A549 (cell line): ENCODE measurements at regions of chr18 and their contacts with region 1.

Region 1: DNA sequence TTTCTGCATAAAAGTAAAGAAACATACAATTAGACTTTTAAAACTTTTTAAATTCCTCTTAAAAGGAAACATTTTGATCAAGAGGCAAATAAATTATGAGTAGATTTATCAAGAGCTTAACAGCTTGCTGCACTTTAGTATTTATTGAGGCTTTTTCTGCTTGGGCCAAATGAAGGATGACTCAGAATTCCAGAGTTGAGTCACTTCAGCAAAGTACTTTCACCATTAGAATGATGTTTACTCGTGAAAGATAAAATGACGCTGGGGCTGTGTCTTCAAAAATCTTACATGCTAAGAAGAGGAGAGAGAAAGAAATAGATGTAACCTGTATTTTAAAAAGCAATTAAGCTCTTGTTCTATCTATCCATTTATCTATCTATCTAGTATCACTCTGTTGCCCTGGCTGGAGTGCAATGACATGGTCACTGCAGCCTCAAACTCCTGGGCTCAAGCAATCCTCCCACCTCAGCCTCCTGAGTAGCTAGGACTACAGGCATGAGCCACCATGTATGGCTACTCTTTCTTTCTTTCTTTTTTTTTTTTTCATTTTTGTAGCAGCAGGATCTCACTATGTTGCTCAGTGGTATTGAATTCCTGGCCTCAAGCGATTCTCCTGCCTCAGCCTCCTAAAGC is 75.3 kb upstream of the RIOK3 start:
- DNase-seq: peak; percentile 34 to 51
- ATAC-seq: peak; percentile 64 to 79; a peak in 5 of 6 replicates
- H3K4me3 ChIP-seq: no peak overlapping the region
- H3K27ac ChIP-seq: peak overlapping the region; percentile 61 to 83
- H3K4me1 ChIP-seq: peaks cover 36% of the 10 kb centered on the region
- CTCF ChIP-seq: no peak
- EP300 ChIP-seq: no peak
- POLR2A ChIP-seq: no peak
- RAD21 ChIP-seq: no peak

Region 2: GRCh38 chr18:23032030-23032582 is 345.7 kb before region 1 on chr18:
- CTCF ChIA-PET with region 1: interaction called, 16 read pairs
- POLR2A ChIA-PET with region 1: interaction called, 4 read pairs
- DNase-seq: no peak
- ATAC-seq: no peak; a peak in 1 of 6 replicates
- H3K4me3 ChIP-seq: no peak overlapping the region
- H3K27ac ChIP-seq: peak overlapping the region; percentile 10 to 61; a peak in 3 of 6 replicates
- H3K4me1 ChIP-seq: peaks cover 14% of the 10 kb centered on the region
- CTCF ChIP-seq: no peak
- EP300 ChIP-seq: no peak
- POLR2A ChIP-seq: no peak
- RAD21 ChIP-seq: no peak

Region 3: GRCh38 chr18:23398401-23398800 is 20.6 kb after region 1 on chr18:
- CTCF ChIA-PET with region 1: interaction called, 10 read pairs
- POLR2A ChIA-PET with region 1: no interaction called
- DNase-seq: no peak
- ATAC-seq: no peak
- H3K4me3 ChIP-seq: no peak overlapping the region
- H3K27ac ChIP-seq: no peak overlapping the region
- H3K4me1 ChIP-seq: peaks cover 13% of the 10 kb centered on the region
- CTCF ChIP-seq: no peak
- EP300 ChIP-seq: no peak
- POLR2A ChIP-seq: no peak
- RAD21 ChIP-seq: no peak